Activated CD4-positive, alpha-beta memory T cell treated with anti-CD3 and anti-CD28 coated beads, Interleukin-2, amount 10 ng/mL, durations not matched to agents 7 days and 5 days (primary cell): ENCODE measurements at regions of chr5 and their contacts with region 1.

Region 1: GRCh38 chr5:159156426-159157238 is 52.7 kb downstream of the RNF145 start:
- DNase-seq: peak; percentile 30
- H3K4me3 Mint-ChIP-seq: no peak overlapping the region
- H3K27ac Mint-ChIP-seq: peak overlapping the region; percentile 9
- H3K4me1 Mint-ChIP-seq: peaks cover 24% of the 10 kb centered on the region
- H3K27me3 Mint-ChIP-seq: no peaks in the 10 kb centered on the region

Region 2: DNA sequence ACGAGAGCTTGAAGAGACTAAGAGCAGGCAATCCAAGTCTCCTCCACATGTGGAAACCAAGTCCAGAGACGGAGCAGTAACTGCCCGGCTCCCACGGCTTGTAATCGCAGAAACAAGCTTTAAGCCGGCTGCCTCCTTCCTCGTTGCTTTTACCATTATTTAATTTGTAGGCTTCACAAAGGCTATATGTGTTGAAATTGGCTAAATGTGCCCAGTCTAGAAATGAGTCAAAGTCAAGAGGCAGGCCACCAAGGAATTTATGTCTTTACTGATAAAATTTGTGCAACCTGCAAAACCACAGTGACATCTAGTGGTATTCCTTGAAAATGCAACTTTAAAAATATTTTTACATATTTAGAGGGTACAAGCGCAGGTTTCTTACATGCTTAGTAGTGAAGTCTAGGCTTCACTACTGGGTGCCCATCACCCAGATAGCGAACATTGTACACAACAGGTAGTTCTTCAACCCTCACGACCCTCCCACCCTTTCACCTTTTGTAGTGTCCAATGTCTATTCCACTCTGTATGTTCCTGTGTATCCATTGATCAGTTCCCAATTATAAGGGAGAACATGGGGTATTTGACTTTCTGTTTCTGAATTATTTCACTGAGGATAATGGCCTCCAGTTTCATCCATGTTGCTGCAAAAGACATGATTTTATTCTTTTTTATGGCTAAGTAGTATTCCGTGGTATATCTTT is 23.4 kb before region 1 on chr5:
- CTCF ChIA-PET with region 1: interaction called, 10 read pairs
- POLR2A ChIA-PET with region 1: no interaction called
- DNase-seq: no peak
- H3K4me3 Mint-ChIP-seq: no peak overlapping the region
- H3K27ac Mint-ChIP-seq: no peak overlapping the region
- H3K4me1 Mint-ChIP-seq: no peaks in the 10 kb centered on the region
- H3K27me3 Mint-ChIP-seq: peaks cover 23% of the 10 kb centered on the region

Region 3: GRCh38 chr5:159170021-159170420 is 13.4 kb after region 1 on chr5:
- CTCF ChIA-PET with region 1: interaction called, 20 read pairs
- POLR2A ChIA-PET with region 1: no interaction called
- DNase-seq: no peak
- H3K4me3 Mint-ChIP-seq: no peak overlapping the region
- H3K27ac Mint-ChIP-seq: no peak overlapping the region
- H3K4me1 Mint-ChIP-seq: peaks cover 2% of the 10 kb centered on the region
- H3K27me3 Mint-ChIP-seq: no peaks in the 10 kb centered on the region

Region 4: GRCh38 chr5:159175547-159175946 is 18.9 kb after region 1 on chr5:
- CTCF ChIA-PET with region 1: interaction called, 11 read pairs
- POLR2A ChIA-PET with region 1: no interaction called
- DNase-seq: no peak
- H3K4me3 Mint-ChIP-seq: no peak overlapping the region
- H3K27ac Mint-ChIP-seq: peak overlapping the region; percentile 47
- H3K4me1 Mint-ChIP-seq: peaks cover 44% of the 10 kb centered on the region
- H3K27me3 Mint-ChIP-seq: no peaks in the 10 kb centered on the region

Region 5: GRCh38 chr5:159198063-159199036 is 41.7 kb after region 1 on chr5:
- CTCF ChIA-PET with region 1: interaction called, 17 read pairs
- POLR2A ChIA-PET with region 1: interaction called, 4 read pairs
- DNase-seq: no peak
- H3K4me3 Mint-ChIP-seq: no peak overlapping the region
- H3K27ac Mint-ChIP-seq: peak overlapping the region; percentile 70
- H3K4me1 Mint-ChIP-seq: peaks cover 46% of the 10 kb centered on the region
- H3K27me3 Mint-ChIP-seq: no peaks in the 10 kb centered on the region

Region 6: GRCh38 chr5:159316519-159317383 is 160.1 kb after region 1 on chr5:
- CTCF ChIA-PET with region 1: interaction called, 55 read pairs
- POLR2A ChIA-PET with region 1: no interaction called
- DNase-seq: peak; percentile 56
- H3K4me3 Mint-ChIP-seq: no peak overlapping the region
- H3K27ac Mint-ChIP-seq: no peak overlapping the region
- H3K4me1 Mint-ChIP-seq: no peaks in the 10 kb centered on the region
- H3K27me3 Mint-ChIP-seq: peaks cover 21% of the 10 kb centered on the region

Region 7: DNA sequence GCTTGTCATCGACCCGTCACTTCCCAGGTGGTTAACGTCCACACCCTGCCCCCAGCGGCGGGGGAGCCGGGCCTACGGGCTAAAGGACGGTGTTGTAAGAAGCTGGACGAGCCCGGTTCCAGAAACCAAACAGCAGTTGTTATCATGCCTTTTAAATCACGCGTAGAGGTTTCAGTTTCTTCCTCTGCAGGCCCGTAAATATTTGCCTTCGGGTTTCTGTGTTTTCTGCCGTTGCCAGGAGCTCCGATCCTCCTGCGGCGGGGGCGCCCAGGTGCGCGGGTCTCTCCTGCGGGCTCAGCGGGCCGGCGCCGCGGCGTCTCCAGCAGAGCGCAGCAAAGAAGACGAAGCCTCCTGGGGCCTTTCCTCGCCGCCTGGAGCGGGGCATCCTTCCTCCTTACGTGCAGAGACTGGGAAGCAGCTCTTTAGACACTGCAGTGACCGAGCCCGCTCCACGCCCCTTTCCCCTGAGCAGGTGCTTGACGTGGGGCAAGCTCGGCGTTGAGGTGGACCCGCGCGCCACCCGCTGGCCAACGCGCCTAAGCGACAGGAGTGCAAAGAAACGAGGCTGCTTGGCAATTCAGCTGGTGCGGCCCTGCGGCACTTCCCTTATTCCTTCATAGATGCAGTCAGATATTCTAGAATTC is 830.5 kb after region 1 on chr5:
- CTCF ChIA-PET with region 1: interaction called, 20 read pairs
- POLR2A ChIA-PET with region 1: no interaction called
- DNase-seq: peak; percentile 78
- H3K4me3 Mint-ChIP-seq: peak overlapping the region; percentile 31
- H3K27ac Mint-ChIP-seq: no peak overlapping the region
- H3K4me1 Mint-ChIP-seq: peaks cover 2% of the 10 kb centered on the region
- H3K27me3 Mint-ChIP-seq: peaks cover 64% of the 10 kb centered on the region